RWPE1 (cell line): ENCODE measurements at regions of chr19 and their contacts with region 1.

Region 1: GRCh38 chr19:51367565-51368365 is 1.0 kb downstream of the CLDND2 start:
- DNase-seq: peak; percentile 95
- H3K27ac ChIP-seq: peak overlapping the region; percentile 93
- CTCF ChIP-seq: no peak

Region 2: GRCh38 chr19:51393959-51394836 is 26.4 kb after region 1 on chr19:
- CTCF ChIA-PET with region 1: no interaction called
- POLR2A ChIA-PET with region 1: interaction called, 11 read pairs
- DNase-seq: peak; percentile 95
- H3K27ac ChIP-seq: peak overlapping the region; percentile 83
- CTCF ChIP-seq: no peak